ENCODE measurements at regions of chr12 and their contacts with region 1.

Region 1: DNA sequence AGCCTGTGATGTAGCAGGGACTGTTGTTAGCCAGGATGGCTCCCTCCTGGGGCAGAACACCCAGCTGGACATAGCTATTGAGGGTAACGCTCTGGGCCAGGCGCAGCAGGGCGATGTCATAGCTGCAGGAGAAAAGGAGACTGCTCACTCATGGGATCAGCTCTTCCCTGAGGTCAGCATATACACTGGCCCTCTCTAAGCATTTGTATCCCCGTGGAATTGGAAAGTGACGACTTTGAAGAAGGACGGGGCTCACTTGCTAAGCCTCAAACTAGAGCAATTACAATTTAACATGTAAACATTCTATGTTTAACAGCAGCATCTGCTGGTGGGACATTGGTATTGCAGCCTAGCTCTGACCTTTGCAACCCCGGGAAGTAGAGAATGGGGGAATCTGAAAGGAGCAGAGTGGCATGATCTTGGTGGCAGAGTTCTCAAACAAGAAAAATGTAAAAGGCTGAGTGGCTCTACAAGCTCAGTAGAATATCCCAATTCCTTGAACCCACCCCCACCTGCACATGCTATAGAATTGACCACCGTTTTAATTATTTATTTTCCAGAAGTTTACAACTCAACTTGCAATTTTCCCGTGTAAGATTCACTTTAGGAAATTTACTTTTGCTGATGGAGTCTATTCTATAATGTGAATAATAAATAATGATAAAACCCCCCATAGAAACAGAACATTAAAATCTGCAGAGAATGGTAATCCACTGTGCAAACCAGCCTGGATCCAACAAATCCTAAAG is 5.0 kb downstream of the CELA1 start:
- DNase-seq: peak; percentile 65
- ATAC-seq: peak; percentile 89
- H3K4me3 ChIP-seq: no peak overlapping the region
- H3K27ac ChIP-seq: no peak overlapping the region
- H3K4me1 ChIP-seq: peaks cover 20% of the 10 kb centered on the region
- H3K27me3 ChIP-seq: no peaks in the 10 kb centered on the region
- CTCF ChIP-seq: peak; percentile 99 to 100 (median 99); a peak in 5 of 6 replicates
- EP300 ChIP-seq: no peak
- POLR2A ChIP-seq: no peak
- RAD21 ChIP-seq: peak; percentile 98

Region 2: GRCh38 chr12:50924439-50925341 is 416.7 kb before region 1 on chr12:
- CTCF ChIA-PET with region 1: interaction called, 5 read pairs
- POLR2A ChIA-PET with region 1: no interaction called
- RAD21 ChIA-PET with region 1: interaction called, 3 read pairs
- SMC1A ChIA-PET with region 1: interaction called, 10 read pairs
- in situ Hi-C with region 1: no loop called
- intact Hi-C with region 1: no loop called
- DNase-seq: peak; percentile 76
- ATAC-seq: peak; percentile 94
- H3K4me3 ChIP-seq: peak overlapping the region; percentile 60
- H3K27ac ChIP-seq: peak overlapping the region; percentile 3; the same call in 1 of the 2 replicates
- H3K4me1 ChIP-seq: peaks cover 26% of the 10 kb centered on the region
- H3K27me3 ChIP-seq: no peaks in the 10 kb centered on the region
- CTCF ChIP-seq: no peak
- EP300 ChIP-seq: peak; percentile 61 to 71; a peak in 3 of 4 replicates
- POLR2A ChIP-seq: no peak
- RAD21 ChIP-seq: no peak

Region 3: DNA sequence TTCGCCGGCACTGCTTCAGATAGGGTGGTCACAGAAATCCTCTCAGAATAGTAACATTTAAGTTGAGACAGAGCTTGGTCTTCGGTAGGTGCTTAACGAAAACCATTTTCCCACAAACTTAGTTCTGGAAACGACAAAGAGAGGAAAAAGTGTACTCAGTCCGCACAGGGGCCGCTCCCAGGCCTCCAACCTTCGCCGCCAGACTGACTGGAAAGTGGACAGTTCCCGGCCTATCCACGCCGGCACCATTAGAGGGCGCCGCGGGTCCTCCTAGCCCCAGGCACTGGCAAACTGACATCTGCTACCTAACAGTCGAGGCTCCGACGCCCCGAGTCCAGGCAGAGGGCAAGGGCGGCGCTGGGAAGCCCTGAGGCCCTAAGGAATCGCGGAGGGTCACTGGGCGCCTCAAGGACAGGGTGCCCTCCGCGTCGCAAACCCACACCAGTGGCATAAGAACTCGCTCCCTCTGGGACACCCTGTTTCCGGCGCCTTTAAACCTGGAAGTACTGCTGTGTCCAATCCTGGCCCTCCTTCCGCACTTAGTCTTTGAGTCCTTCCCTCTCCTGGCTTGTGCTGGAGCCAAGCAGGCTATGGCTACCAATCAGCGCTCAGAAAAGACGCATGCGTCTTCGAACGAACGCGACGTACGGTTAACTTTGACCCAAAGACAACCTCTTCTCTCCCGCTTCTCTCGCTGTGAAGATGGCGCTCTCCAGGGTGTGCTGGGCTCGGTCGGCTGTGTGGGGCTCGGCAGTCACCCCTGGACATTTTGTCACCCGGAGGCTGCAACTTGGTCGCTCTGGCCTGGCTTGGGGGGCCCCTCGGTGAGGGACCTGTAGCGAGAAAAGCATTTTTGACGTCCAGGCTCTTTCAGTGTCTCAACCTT is 293.5 kb before region 1 on chr12 and contains the start of gene LETMD1:
- CTCF ChIA-PET with region 1: interaction called, 61 read pairs
- POLR2A ChIA-PET with region 1: interaction called, 6 read pairs
- RAD21 ChIA-PET with region 1: interaction called, 26 read pairs
- SMC1A ChIA-PET with region 1: interaction called, 9 read pairs
- in situ Hi-C with region 1: loop called (anchors 5 kb)
- intact Hi-C with region 1: loop called (anchors 2 kb)
- DNase-seq: peak; percentile 98
- ATAC-seq: peak; percentile 98
- H3K4me3 ChIP-seq: peak within 1 kb of the TSS; percentile 94
- H3K27ac ChIP-seq: peak within 1 kb of the TSS; percentile 96
- H3K4me1 ChIP-seq: peaks cover 6% of the 10 kb centered on the region
- H3K27me3 ChIP-seq: no peaks in the 10 kb centered on the region
- CTCF ChIP-seq: peak; percentile 92 to 97 (median 94)
- EP300 ChIP-seq: no peak
- POLR2A ChIP-seq: peak; percentile 95
- RAD21 ChIP-seq: peak; percentile 82
- polyA plus RNA-seq, gene LETMD1: 36.5 to 37.1 TPM

Region 4: DNA sequence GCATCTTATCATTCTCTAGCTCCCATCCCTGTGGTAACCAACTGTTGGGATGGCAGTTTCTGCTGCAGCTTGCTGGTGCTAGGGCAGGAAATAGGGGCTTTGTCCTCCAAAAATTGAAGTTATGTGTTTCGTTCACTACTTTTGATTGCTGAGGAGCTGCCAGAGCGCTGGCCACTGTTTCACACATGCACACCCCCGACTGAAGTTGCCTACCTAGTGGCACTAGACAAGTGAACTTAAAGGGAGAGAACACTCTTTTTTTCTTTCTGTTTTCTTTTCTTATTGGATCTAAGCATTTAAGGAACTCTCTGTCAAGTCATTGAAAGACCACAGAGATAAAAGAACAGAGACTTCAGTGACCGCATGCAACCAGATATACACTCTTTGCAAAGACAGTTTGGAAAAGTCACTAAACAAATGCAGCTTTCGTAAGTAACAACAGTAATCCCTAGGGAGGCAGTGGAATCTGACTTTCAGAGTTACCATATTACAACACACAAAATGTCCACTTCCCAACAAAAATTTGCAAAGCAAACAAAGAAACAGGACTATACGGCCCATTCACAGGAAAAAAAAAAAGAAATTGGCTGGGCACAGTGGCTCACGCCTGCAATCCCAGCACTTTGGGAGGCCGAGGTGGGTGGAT is 180.5 kb before region 1 on chr12:
- CTCF ChIA-PET with region 1: no interaction called
- POLR2A ChIA-PET with region 1: no interaction called
- RAD21 ChIA-PET with region 1: no interaction called
- SMC1A ChIA-PET with region 1: no interaction called
- in situ Hi-C with region 1: no loop called
- intact Hi-C with region 1: no loop called
- DNase-seq: no peak
- ATAC-seq: no peak
- H3K4me3 ChIP-seq: no peak overlapping the region
- H3K27ac ChIP-seq: no peak overlapping the region
- H3K4me1 ChIP-seq: no peaks in the 10 kb centered on the region
- H3K27me3 ChIP-seq: no peaks in the 10 kb centered on the region
- CTCF ChIP-seq: no peak
- EP300 ChIP-seq: no peak
- POLR2A ChIP-seq: no peak
- RAD21 ChIP-seq: no peak

Region 5: DNA sequence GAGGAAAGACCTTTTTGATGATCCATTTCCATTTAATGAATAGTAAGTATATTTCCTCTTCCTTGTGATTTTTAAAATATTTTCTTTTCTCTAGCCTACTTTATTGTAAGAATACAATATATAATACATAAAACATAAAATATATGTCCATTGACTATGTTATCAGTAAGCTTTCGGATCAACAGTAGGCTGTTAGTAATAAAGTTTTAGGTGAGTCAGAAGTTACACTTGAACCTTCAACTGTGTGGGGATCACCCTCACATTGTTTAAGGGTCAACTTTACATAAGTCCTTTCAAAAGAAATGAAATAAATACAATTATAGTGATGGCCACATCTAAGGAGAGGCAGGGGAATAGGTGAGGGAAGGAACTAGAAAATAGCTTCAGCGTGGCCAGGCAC is 163.5 kb before region 1 on chr12:
- CTCF ChIA-PET with region 1: no interaction called
- POLR2A ChIA-PET with region 1: no interaction called
- RAD21 ChIA-PET with region 1: no interaction called
- SMC1A ChIA-PET with region 1: no interaction called
- in situ Hi-C with region 1: no loop called
- intact Hi-C with region 1: no loop called
- DNase-seq: no peak
- ATAC-seq: no peak
- H3K4me3 ChIP-seq: no peak overlapping the region
- H3K27ac ChIP-seq: no peak overlapping the region
- H3K4me1 ChIP-seq: no peaks in the 10 kb centered on the region; the same call in 1 of the 2 replicates
- H3K27me3 ChIP-seq: no peaks in the 10 kb centered on the region
- CTCF ChIP-seq: no peak
- EP300 ChIP-seq: no peak
- POLR2A ChIP-seq: no peak
- RAD21 ChIP-seq: no peak

Region 6: DNA sequence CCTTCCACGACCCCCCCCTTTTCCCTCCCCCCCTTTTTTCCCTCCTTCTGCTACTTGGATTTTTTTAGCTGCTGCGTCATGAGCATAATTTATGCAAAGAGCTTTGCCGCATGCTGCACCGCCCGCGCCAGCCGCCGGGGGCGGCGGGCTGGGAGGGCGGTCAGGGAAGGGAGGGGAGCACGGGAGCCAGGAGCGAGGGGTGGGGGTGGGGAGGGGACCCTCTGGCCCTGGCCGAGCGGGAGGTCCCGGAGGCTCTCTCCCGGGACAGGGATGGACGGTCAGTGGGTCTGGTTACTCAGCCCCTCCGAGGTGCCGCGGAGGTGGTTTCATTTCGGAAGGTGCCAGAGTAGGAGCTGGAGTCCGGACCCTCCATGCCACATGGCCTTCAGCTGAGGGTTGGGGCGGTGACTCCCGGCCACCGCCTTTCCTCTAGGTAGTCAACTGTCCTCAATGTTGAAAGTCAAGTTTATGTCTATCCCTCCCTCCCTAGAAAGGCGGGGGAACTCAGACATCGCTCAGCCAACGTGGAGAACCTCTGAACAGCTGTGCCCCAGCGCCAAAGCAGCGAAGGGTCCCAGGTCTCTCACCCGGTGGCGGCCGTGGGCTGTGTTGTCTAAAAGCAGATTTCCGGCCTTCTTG is 123.3 kb before region 1 on chr12 and contains the start of gene POU6F1:
- CTCF ChIA-PET with region 1: interaction called, 10 read pairs
- POLR2A ChIA-PET with region 1: interaction called, 5 read pairs
- RAD21 ChIA-PET with region 1: interaction called, 8 read pairs
- SMC1A ChIA-PET with region 1: interaction called, 4 read pairs
- in situ Hi-C with region 1: no loop called
- intact Hi-C with region 1: no loop called
- DNase-seq: peak; percentile 25
- ATAC-seq: peak; percentile 90
- H3K4me3 ChIP-seq: peak within 1 kb of the TSS; percentile 77
- H3K27ac ChIP-seq: peak within 1 kb of the TSS; percentile 62
- H3K4me1 ChIP-seq: peaks cover 4% of the 10 kb centered on the region; the same call in 1 of the 2 replicates
- H3K27me3 ChIP-seq: no peaks in the 10 kb centered on the region
- CTCF ChIP-seq: peak; percentile 43 to 73 (median 44); a peak in 5 of 6 replicates
- EP300 ChIP-seq: no peak
- POLR2A ChIP-seq: peak; percentile 75
- RAD21 ChIP-seq: peak; percentile 30; the same call in 1 of the 2 replicates
- polyA plus RNA-seq, gene POU6F1: 0.26 to 0.31 TPM

Region 7: GRCh38 chr12:51270067-51270970 is 71.1 kb before region 1 on chr12 and contains the start of gene SMAGP:
- CTCF ChIA-PET with region 1: interaction called, 92 read pairs
- POLR2A ChIA-PET with region 1: interaction called, 3 read pairs
- RAD21 ChIA-PET with region 1: interaction called, 49 read pairs
- SMC1A ChIA-PET with region 1: interaction called, 67 read pairs
- in situ Hi-C with region 1: loop called (anchors 5 kb)
- intact Hi-C with region 1: loop called (anchors 1 kb)
- DNase-seq: no peak
- ATAC-seq: peak; percentile 90
- H3K4me3 ChIP-seq: peak within 1 kb of the TSS; percentile 65
- H3K27ac ChIP-seq: no peak within 1 kb of the TSS
- H3K4me1 ChIP-seq: peaks cover 6% of the 10 kb centered on the region
- H3K27me3 ChIP-seq: peaks cover 1 to 6% of the 10 kb centered on the region in 2 experiments; a peak in 2 of 4 replicates
- CTCF ChIP-seq: peak in 1 of 3 experiments; percentile 13; a peak in 1 of 6 replicates
- EP300 ChIP-seq: no peak
- POLR2A ChIP-seq: no peak
- RAD21 ChIP-seq: no peak
- polyA plus RNA-seq, gene SMAGP: 5.3 to 6.3 TPM

Region 8: GRCh38 chr12:51320695-51321320 is 20.6 kb before region 1 on chr12:
- CTCF ChIA-PET with region 1: interaction called, 54 read pairs
- POLR2A ChIA-PET with region 1: interaction called, 7 read pairs
- RAD21 ChIA-PET with region 1: interaction called, 22 read pairs
- SMC1A ChIA-PET with region 1: interaction called, 58 read pairs
- in situ Hi-C with region 1: no loop called
- intact Hi-C with region 1: no loop called
- DNase-seq: no peak
- ATAC-seq: no peak
- H3K4me3 ChIP-seq: peak overlapping the region; percentile 57; the same call in 1 of the 2 replicates
- H3K27ac ChIP-seq: peak overlapping the region; percentile 68
- H3K4me1 ChIP-seq: peaks cover 42% of the 10 kb centered on the region
- H3K27me3 ChIP-seq: no peaks in the 10 kb centered on the region
- CTCF ChIP-seq: no peak
- EP300 ChIP-seq: no peak
- POLR2A ChIP-seq: no peak
- RAD21 ChIP-seq: no peak

Region 9: GRCh38 chr12:51505360-51506105 is 164.1 kb after region 1 on chr12:
- CTCF ChIA-PET with region 1: no interaction called
- POLR2A ChIA-PET with region 1: no interaction called
- RAD21 ChIA-PET with region 1: no interaction called
- SMC1A ChIA-PET with region 1: no interaction called
- in situ Hi-C with region 1: no loop called
- intact Hi-C with region 1: no loop called
- DNase-seq: no peak
- ATAC-seq: no peak
- H3K4me3 ChIP-seq: no peak overlapping the region
- H3K27ac ChIP-seq: no peak overlapping the region
- H3K4me1 ChIP-seq: peaks cover 11% of the 10 kb centered on the region
- H3K27me3 ChIP-seq: no peaks in the 10 kb centered on the region
- CTCF ChIP-seq: no peak
- EP300 ChIP-seq: no peak
- POLR2A ChIP-seq: no peak
- RAD21 ChIP-seq: no peak